Activated naive CD4-positive, alpha-beta T cell treated with anti-CD3 and anti-CD28 coated beads for 36 hours (primary cell): ENCODE measurements at regions of chr15 and their contacts with region 1.

Region 1: DNA sequence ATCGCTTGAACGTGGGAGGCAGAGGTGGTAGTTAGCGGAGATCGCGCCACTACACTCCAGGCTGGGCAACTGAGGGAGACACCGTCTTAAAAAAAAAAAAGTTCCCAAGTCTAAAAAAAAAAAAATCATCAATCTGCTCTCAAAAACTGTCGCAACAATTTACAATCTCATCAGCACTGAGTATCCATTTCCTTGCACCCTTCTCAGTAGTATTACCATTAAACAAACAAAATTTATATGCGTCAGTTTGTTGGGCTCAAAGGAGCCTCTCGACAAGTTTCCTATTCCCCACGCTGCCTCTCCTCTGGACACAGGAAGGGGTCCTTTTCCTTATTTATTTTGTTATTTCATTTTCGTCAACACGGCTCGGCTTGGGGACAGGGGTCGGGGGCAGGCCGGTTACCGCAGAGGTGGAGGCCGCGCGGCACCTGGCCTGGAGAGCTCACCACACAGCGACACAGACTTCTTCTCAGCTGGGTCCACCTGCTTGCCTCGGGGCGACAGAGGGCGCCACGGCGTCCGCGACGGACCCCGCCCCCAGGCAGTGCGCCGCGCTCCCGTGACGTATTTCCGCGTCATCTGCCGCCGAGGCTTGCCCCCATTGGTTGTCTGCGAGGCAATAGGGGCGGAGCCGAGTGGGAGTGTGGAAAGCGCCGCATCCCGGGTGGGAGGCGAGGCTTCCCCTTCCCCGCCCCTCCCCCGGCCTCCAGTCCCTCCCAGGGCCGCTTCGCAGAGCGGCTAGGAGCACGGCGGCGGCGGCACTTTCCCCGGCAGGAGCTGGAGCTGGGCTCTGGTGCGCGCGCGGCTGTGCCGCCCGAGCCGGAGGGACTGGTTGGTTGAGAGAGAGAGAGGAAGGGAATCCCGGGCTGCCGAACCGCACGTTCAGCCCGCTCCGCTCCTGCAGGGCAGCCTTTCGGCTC is at the start of gene MAP2K1:
- DNase-seq: peak; percentile 98
- H3K4me3 Mint-ChIP-seq: peak within 1 kb of the TSS; percentile 100
- H3K27ac Mint-ChIP-seq: peak within 1 kb of the TSS; percentile 98
- H3K4me1 Mint-ChIP-seq: peaks cover 51% of the 10 kb centered on the region
- H3K27me3 Mint-ChIP-seq: no peaks in the 10 kb centered on the region
- total RNA-seq, gene MAP2K1: 69.6 to 72.6 TPM

Region 2: DNA sequence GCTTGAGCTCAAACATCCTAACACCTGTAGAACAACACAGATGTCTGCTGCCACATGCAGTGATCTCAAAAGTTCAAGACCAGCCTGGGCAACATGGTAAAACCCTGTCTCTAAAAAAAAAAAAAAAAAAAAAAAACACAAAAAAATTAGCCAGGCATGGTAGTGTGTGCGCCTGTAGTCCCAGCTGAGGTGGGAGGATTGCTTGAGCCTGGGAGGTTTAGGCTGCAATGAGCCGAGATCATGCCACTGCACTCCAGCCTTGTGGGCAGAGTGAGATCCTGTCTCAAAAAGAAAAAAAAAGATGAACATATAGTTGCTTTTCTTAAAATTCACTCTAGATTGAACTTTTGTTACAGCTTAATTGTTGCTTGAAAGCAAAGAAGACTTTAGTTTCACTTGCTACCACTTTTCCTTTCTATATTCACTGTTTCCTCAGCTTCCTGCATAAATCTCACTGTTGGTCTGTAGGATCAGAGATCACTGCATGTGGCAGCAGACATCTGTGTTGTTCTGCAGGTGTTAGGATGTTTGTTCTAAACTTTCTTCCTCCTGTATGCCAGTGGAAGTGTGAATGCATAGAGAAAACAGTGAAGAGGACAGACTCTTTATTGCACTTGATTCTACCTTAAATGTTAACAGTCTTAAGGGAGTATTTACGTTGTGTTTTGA is 504.6 kb before region 1 on chr15:
- CTCF ChIA-PET with region 1: no interaction called
- intact Hi-C with region 1: loop called (anchors 10 kb)
- DNase-seq: no peak
- H3K4me3 Mint-ChIP-seq: no peak overlapping the region
- H3K27ac Mint-ChIP-seq: peak overlapping the region; percentile 66
- H3K4me1 Mint-ChIP-seq: peaks cover 61% of the 10 kb centered on the region
- H3K27me3 Mint-ChIP-seq: no peaks in the 10 kb centered on the region

Region 3: DNA sequence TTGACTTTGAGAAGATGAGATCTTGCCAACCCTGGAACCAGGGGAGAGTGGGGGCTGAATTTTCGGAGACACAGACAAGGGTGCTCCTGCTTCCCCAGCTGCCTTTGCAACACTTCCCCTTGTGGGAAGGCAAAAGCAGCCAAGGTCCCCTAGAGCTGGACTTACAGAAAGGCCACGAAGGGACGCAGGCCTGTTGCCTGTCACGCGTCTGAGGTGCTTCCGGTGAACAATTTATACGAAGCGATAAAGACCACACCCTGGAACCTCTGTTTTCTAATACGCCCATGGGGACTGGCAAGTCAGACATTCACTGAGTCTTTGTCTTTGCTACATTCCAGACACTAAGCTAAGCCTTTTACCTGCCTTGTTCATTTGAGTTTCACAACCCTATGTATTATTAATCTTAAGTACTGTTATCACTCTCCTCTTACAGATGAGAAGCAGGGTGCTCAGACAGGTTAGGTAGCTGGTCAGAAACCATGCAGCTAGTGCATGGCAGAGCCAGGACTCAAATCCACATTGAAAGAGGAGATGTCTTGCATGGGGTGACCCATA is 146.1 kb before region 1 on chr15:
- CTCF ChIA-PET with region 1: no interaction called
- intact Hi-C with region 1: no loop called
- DNase-seq: no peak
- H3K4me3 Mint-ChIP-seq: no peak overlapping the region
- H3K27ac Mint-ChIP-seq: no peak overlapping the region
- H3K4me1 Mint-ChIP-seq: no peaks in the 10 kb centered on the region
- H3K27me3 Mint-ChIP-seq: peaks cover 8% of the 10 kb centered on the region

Region 4: GRCh38 chr15:66356345-66357236 is 29.9 kb before region 1 on chr15 and contains the start of gene TIPIN:
- CTCF ChIA-PET with region 1: interaction called, 12 read pairs
- intact Hi-C with region 1: loop called (anchors 1 kb)
- DNase-seq: peak; percentile 99
- H3K4me3 Mint-ChIP-seq: peak within 1 kb of the TSS; percentile 96
- H3K27ac Mint-ChIP-seq: peak within 1 kb of the TSS; percentile 95
- H3K4me1 Mint-ChIP-seq: peaks cover 37% of the 10 kb centered on the region
- H3K27me3 Mint-ChIP-seq: no peaks in the 10 kb centered on the region
- total RNA-seq, gene TIPIN: 33.8 to 34.7 TPM

Region 5: GRCh38 chr15:66401130-66402021 is 14.9 kb after region 1 on chr15:
- CTCF ChIA-PET with region 1: interaction called, 5 read pairs
- intact Hi-C with region 1: loop called (anchors 1 kb)
- DNase-seq: peak; percentile 51
- H3K4me3 Mint-ChIP-seq: peak overlapping the region; percentile 59
- H3K27ac Mint-ChIP-seq: peak overlapping the region; percentile 81
- H3K4me1 Mint-ChIP-seq: peaks cover 77% of the 10 kb centered on the region
- H3K27me3 Mint-ChIP-seq: no peaks in the 10 kb centered on the region

Region 6: DNA sequence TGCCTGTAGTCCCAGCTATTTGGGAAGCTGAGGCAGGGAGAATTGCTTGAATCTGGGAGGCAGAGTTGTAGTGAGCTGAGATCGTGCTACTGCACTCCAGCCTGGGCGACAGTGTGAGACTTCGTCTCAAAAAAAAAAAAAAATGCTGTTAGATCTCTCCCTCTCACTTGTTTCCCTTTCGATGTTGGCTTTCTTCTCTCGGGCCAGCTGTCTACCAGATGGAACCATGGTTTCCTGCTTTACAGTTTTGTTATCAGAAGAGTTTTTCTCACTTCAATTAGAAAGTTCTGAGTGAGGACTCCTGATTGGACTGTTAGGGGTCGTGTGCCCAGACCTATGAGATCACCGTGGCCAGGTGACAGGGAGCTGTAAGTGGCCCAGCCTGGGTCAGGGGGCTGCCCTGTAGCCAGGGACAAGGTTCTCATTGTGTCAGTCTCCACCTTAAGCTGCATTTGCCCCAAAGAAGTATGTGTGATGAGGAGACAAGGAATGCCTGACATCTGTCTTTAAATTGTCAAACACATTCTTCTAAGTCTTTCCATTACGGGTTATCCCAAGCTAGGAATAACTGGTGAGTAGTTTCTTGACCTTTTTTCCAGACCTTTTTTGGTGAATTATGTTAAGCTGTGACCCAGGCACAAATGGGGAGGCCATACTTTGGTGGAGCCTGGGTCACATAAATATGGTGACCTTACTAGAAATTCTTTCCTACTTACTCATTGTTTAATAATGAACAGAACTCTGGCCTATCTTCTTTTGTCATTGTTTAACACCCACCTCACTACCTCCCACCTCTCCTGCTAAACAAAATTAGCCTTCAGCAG is 85.9 kb after region 1 on chr15:
- CTCF ChIA-PET with region 1: interaction called, 4 read pairs
- intact Hi-C with region 1: loop called (anchors 1 kb)
- DNase-seq: peak; percentile 82
- H3K4me3 Mint-ChIP-seq: peak overlapping the region; percentile 66
- H3K27ac Mint-ChIP-seq: peak overlapping the region; percentile 80
- H3K4me1 Mint-ChIP-seq: peaks cover 62% of the 10 kb centered on the region
- H3K27me3 Mint-ChIP-seq: no peaks in the 10 kb centered on the region

Region 7: DNA sequence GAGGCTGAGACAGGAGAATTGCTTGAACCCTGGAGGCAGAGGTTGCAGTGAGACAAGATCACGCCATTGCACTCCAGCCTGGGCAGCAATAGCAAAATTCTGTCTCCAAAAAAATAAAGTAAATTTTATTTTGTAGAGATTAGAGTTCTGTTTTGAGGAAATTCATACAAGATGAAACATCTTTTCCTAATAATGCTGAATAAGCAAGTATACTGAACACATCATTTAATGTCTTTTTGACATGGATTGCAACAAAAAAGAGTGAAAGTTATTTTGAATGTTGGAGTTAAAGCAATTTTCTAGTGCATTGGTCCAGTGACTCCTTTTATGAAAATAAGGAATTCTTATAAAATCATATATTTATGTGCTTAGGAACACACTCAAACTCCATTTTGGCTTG is 158.8 kb after region 1 on chr15:
- CTCF ChIA-PET with region 1: no interaction called
- intact Hi-C with region 1: no loop called
- DNase-seq: no peak
- H3K4me3 Mint-ChIP-seq: no peak overlapping the region
- H3K27ac Mint-ChIP-seq: no peak overlapping the region
- H3K4me1 Mint-ChIP-seq: no peaks in the 10 kb centered on the region
- H3K27me3 Mint-ChIP-seq: no peaks in the 10 kb centered on the region